CD8-positive, alpha-beta T cell (primary cell): ENCODE measurements at regions of chr19 and their contacts with region 1.

Region 1: DNA sequence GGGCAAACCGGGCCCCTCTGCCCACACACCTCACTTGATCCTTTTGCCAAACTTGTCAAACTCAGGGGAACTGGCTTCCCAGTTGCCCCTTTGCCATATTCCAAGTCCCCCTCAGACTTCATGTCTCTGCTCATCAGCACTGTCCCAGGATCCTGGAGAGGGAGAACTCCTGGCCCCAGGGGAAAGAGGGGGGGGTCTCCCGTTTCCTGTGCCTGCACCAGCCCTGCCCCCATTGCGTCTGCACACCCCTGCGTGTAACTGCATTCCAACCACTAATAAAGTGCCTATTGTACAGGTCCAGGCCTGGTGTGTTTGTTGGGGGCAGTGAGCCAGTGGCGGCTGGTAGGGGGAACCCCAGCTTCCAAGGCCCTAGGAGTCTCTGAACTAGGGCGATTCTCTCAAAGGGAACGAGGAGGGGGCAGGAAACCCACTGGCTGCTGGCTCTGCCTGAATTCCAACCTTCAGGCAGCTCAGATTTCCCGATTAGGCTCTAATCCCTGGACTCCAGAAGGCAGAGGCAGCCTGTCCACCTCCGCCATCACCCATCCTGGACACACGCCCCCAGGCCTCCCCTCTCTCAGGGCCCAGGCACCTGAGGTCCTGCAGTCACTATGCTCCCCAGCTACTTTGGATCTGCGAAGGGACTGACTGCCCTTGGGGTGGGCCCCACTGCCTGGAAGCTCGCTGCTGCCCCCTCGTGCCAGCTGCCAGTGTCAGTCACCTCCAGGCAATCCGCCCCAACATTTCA is 9.7 kb upstream of the ILF3 start:
- DNase-seq: peak; percentile 76 to 92 (median 87)
- ATAC-seq: peak; percentile 90
- H3K4me3 ChIP-seq: no peak overlapping the region
- H3K4me3 Mint-ChIP-seq: peak overlapping the region; percentile 22
- H3K27ac ChIP-seq: peak overlapping the region in 1 of 2 experiments; percentile 65
- H3K27ac Mint-ChIP-seq: peak overlapping the region; percentile 92
- H3K4me1 ChIP-seq: peaks cover 39% of the 10 kb centered on the region
- H3K4me1 Mint-ChIP-seq: peaks cover 43% of the 10 kb centered on the region
- H3K27me3 ChIP-seq: no peaks in the 10 kb centered on the region
- H3K27me3 Mint-ChIP-seq: no peaks in the 10 kb centered on the region
- CTCF ChIP-seq: peak; percentile 84

Region 2: DNA sequence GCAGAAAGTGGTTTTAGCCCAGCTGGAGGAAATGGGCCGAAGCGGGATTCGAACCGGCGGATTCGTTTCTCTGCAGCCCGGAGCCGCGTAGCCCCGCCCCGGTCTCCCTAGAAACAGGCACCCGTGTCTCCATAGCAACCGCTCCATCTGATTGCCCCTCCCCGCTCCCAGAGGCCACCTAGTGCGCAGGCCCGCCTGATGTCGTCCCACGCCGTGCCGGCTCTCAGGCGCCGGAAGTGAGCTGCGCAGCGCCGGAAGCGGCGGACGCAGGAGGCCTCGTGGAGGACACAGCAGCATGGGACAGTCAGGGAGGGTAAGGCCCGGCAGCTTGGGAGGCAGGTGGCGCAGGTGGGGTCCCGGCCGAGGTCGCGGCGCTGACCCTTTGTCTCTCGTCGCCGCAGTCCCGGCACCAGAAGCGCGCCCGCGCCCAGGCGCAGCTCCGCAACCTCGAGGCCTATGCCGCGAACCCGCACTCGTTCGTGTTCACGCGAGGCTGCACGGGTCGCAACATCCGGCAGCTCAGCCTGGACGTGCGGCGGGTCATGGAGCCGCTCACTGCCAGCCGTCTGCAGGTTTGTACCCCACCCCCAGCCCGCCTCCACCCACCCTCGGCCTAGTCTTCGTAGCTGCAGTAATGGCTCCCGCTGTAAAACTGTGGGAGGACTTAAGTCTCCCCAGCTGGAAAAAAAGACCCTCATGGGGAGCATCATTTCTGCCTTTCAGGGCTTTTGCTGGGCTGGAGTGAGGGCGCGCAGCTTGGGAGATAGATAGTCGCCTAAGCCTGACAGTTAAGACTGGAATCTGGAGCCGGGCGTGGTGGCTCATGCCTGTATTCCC is 538.1 kb before region 1 on chr19 and contains the start of gene PPAN:
- CTCF ChIA-PET with region 1: no interaction called
- POLR2A ChIA-PET with region 1: no interaction called
- intact Hi-C with region 1: no loop called
- DNase-seq: peak; percentile 95 to 99 (median 98)
- ATAC-seq: peak; percentile 63
- H3K4me3 ChIP-seq: peak within 1 kb of the TSS; percentile 53 to 74
- H3K4me3 Mint-ChIP-seq: peak within 1 kb of the TSS; percentile 89
- H3K27ac ChIP-seq: peak within 1 kb of the TSS; percentile 91 to 93
- H3K27ac Mint-ChIP-seq: peak within 1 kb of the TSS; percentile 93
- H3K4me1 ChIP-seq: peaks cover 61% of the 10 kb centered on the region
- H3K4me1 Mint-ChIP-seq: peaks cover 57% of the 10 kb centered on the region
- H3K27me3 ChIP-seq: no peaks in the 10 kb centered on the region
- H3K27me3 Mint-ChIP-seq: no peaks in the 10 kb centered on the region
- CTCF ChIP-seq: no peak
- total RNA-seq, gene PPAN: 97.6 to 114 TPM

Region 3: DNA sequence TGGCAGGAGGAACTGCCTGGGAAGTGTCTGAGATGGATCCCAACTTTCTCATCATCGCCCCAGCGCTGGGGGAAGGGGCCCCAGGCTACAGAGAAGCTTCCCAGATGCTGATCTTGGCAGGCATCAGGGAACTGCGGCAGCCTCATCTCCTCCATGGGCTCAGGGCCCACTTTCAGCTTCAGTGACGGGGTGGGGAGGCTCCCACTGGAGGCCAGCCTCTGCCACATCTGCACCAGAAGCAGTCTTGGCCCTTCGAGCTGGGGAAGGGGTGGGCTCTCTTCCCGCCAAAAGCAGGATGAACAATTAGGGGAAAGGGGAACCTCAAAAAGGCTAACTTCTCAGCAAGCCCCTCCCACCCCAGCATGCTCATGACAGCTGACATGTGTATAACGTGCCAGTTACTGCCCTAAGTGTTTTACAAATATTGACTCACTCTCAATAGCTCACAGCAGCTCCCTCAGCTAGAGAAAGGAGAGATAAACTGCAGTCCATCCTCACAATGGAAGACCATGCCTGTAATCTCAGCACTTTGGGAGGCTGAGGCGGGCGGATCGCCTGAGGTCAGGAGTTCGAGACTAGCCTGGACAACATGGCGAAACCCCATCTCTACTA is 406.2 kb before region 1 on chr19:
- CTCF ChIA-PET with region 1: no interaction called
- POLR2A ChIA-PET with region 1: no interaction called
- intact Hi-C with region 1: no loop called
- DNase-seq: no peak
- ATAC-seq: no peak
- H3K4me3 ChIP-seq: no peak overlapping the region
- H3K4me3 Mint-ChIP-seq: no peak overlapping the region
- H3K27ac ChIP-seq: no peak overlapping the region
- H3K27ac Mint-ChIP-seq: peak overlapping the region; percentile 60
- H3K4me1 ChIP-seq: peaks cover 18% of the 10 kb centered on the region
- H3K4me1 Mint-ChIP-seq: peaks cover 21% of the 10 kb centered on the region
- H3K27me3 ChIP-seq: no peaks in the 10 kb centered on the region
- H3K27me3 Mint-ChIP-seq: no peaks in the 10 kb centered on the region
- CTCF ChIP-seq: no peak

Region 4: DNA sequence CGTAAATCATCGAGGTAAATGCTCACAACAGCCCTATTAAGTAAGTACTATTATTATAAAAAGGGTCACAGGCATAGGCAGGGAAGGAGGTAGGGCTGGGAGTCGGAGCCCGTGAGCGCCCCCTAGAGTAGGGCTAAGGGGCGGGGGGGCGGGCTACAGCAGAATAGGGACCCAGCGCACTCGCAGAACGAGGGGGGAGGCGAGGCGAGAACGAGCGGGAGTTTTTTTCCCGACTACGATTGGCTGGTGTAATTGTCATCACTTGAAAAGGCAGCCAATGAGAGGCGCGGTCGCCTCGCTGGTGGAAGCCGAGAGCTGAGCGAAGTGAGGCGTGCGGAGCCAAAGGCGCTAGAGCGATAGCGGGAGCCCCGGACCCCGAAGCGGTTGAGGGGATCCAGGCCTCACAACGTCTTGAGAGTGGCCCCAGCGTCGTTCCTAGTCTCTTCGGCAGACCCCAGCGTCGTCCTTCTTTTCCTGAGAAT is 165.5 kb before region 1 on chr19:
- CTCF ChIA-PET with region 1: interaction called, 11 read pairs
- POLR2A ChIA-PET with region 1: no interaction called
- intact Hi-C with region 1: no loop called
- DNase-seq: peak; percentile 75 to 96 (median 88)
- ATAC-seq: peak; percentile 97
- H3K4me3 ChIP-seq: peak overlapping the region; percentile 27 to 28
- H3K4me3 Mint-ChIP-seq: peak overlapping the region; percentile 70
- H3K27ac ChIP-seq: no peak overlapping the region
- H3K27ac Mint-ChIP-seq: no peak overlapping the region
- H3K4me1 ChIP-seq: peaks cover 10% of the 10 kb centered on the region
- H3K4me1 Mint-ChIP-seq: peaks cover 14% of the 10 kb centered on the region
- H3K27me3 ChIP-seq: no peaks in the 10 kb centered on the region
- H3K27me3 Mint-ChIP-seq: no peaks in the 10 kb centered on the region
- CTCF ChIP-seq: peak; percentile 74

Region 5: GRCh38 chr19:10593820-10594637 is 50.4 kb before region 1 on chr19:
- CTCF ChIA-PET with region 1: interaction called, 49 read pairs
- POLR2A ChIA-PET with region 1: interaction called, 4 read pairs
- intact Hi-C with region 1: no loop called
- DNase-seq: no peak
- ATAC-seq: no peak
- H3K4me3 ChIP-seq: no peak overlapping the region
- H3K4me3 Mint-ChIP-seq: no peak overlapping the region
- H3K27ac ChIP-seq: no peak overlapping the region
- H3K27ac Mint-ChIP-seq: no peak overlapping the region
- H3K4me1 ChIP-seq: peaks cover 20% of the 10 kb centered on the region
- H3K4me1 Mint-ChIP-seq: peaks cover 25% of the 10 kb centered on the region
- H3K27me3 ChIP-seq: no peaks in the 10 kb centered on the region
- H3K27me3 Mint-ChIP-seq: no peaks in the 10 kb centered on the region
- CTCF ChIP-seq: no peak

Region 6: DNA sequence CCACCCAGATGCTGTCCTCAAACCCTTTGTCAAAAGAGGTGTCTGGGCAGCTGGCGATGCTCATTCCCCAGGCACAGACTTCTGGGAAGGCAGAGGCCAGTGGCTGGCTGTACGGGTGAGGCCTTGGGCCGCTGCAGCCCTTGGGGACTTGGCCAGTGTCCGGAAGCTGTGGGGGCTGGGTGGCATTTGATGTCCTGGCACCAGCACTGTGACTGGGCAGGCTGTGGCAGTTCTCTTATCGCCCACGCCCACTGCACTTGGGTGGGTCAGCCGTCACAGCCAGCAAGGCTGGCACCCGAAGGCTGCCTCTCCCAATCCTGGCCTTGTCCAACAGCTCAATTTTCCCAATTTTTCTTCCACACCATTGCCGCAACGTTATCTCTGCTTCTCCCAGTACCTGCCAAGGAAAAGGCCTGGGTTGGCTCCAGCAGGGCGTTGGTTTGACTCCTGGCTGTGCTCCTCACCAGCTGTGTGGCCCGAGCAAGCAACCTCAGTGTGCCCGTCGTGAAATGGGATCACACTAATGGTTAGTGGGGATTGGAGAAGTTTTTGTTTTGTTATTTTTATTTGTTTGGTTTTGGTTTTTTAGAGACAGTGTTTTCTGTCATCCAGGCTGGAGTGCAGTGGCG is 31.8 kb before region 1 on chr19:
- CTCF ChIA-PET with region 1: interaction called, 35 read pairs
- POLR2A ChIA-PET with region 1: interaction called, 4 read pairs
- intact Hi-C with region 1: no loop called
- DNase-seq: no peak
- ATAC-seq: no peak
- H3K4me3 ChIP-seq: no peak overlapping the region
- H3K4me3 Mint-ChIP-seq: no peak overlapping the region
- H3K27ac ChIP-seq: no peak overlapping the region
- H3K27ac Mint-ChIP-seq: peak overlapping the region; percentile 67
- H3K4me1 ChIP-seq: peaks cover 37% of the 10 kb centered on the region
- H3K4me1 Mint-ChIP-seq: peaks cover 48% of the 10 kb centered on the region
- H3K27me3 ChIP-seq: no peaks in the 10 kb centered on the region
- H3K27me3 Mint-ChIP-seq: no peaks in the 10 kb centered on the region
- CTCF ChIP-seq: no peak

Region 7: DNA sequence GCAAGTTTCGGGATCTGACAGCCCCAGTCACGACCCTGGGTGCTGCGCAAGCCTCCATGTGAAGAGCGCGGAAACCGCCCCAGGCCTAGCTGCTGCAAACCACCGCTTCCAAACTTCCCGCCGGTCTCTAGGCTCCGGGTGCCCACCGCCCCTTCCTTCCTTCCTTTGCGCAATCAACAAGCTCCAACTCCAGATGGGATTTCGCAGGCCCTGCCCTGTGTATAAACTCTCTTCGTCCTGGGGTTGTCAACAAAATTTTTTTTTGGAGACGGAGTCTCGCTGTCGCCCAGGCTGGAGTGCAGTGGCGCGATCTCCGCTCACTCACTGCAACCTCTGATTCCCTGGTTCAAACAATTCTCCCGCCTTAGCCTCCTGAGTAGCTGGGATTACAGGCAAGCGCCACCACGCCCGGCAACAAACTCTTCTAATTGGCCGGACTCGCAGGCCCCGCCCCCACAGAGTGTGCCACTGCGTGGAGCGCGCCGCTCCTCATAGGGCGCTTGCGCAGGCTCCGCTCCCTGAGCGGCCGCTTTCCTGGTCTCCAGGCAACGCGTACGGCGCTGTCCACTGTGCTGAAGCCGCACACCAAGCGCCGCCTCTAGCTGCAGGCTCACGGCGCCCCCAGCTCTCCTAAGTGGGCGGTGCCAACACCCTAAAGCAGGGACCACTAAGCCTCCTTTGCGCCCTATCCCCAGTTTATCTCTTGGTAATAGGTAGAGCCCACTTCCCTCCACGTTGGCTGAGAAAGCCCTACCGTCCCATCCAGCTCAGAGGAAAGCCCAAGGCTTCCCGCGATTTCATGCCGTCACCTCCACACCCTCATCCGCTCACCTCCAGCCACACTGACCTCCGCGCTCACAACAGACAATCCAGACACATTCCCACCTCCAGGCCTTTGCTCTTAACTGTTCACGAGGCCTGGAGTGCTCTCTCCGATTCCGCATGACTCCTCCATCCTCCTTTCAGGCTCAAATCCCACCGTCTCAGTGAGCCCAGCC is 51.3 kb after region 1 on chr19:
- CTCF ChIA-PET with region 1: interaction called, 40 read pairs
- POLR2A ChIA-PET with region 1: interaction called, 8 read pairs
- intact Hi-C with region 1: loop called in 1 of 2 experiments (anchors 1 kb)
- DNase-seq: peak; percentile 77 to 94 (median 87)
- ATAC-seq: peak; percentile 97
- H3K4me3 ChIP-seq: peak overlapping the region; percentile 33 to 58
- H3K4me3 Mint-ChIP-seq: peak overlapping the region; percentile 78
- H3K27ac ChIP-seq: no peak overlapping the region
- H3K27ac Mint-ChIP-seq: no peak overlapping the region
- H3K4me1 ChIP-seq: peaks cover 12% of the 10 kb centered on the region
- H3K4me1 Mint-ChIP-seq: peaks cover 17% of the 10 kb centered on the region
- H3K27me3 ChIP-seq: peaks cover 0 to 2% of the 10 kb centered on the region in 2 experiments
- H3K27me3 Mint-ChIP-seq: peaks cover 5% of the 10 kb centered on the region
- CTCF ChIP-seq: no peak